ENCODE measurements at regions of chr4 and their contacts with region 1.

Region 1: GRCh38 chr4:145609481-145610427 is 9.4 kb upstream of the MMAA start:
- DNase-seq: peak; percentile 73 to 89
- H3K4me3 ChIP-seq: no peak overlapping the region
- H3K27ac ChIP-seq: no peak overlapping the region
- H3K4me1 ChIP-seq: no peaks in the 10 kb centered on the region
- H3K27me3 ChIP-seq: no peaks in the 10 kb centered on the region
- CTCF ChIP-seq: peak in 5 of 7 experiments; percentile 56 to 74 (median 72)
- EP300 ChIP-seq: no peak
- POLR2A ChIP-seq: no peak

Region 2: DNA sequence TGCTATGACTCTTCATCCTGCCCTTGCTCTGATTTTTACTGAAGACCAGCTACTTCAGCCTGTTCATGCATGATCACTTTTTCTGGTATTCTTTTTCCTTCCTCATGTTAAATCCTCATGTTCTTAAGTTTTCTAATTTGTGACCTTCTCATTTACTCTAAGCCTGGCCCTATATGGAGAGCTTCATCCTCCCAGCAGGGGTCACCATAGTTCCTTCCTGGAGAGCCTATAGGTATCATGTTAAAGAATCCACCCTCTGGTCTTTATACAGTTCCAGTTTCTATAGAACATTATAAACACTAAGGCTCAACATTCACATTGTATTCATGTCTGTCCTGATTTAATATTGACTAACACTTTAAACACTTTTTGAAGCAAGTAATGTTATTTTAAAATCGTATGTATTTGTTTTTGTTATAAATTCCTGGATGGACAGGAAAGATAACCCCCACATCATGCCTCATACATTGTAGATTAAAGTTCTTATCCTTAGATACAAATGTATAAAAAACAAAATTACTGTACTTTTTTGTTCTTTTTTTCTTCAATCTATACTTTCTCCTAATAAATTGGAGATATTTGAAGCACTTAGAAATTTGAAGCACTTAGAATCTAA is 375.6 kb before region 1 on chr4:
- intact Hi-C with region 1: loop called (anchors 5 kb)
- DNase-seq: peak; percentile 59 to 89
- H3K4me3 ChIP-seq: no peak overlapping the region
- H3K27ac ChIP-seq: no peak overlapping the region
- H3K4me1 ChIP-seq: no peaks in the 10 kb centered on the region
- H3K27me3 ChIP-seq: no peaks in the 10 kb centered on the region
- CTCF ChIP-seq: peak in 5 of 7 experiments; percentile 55 to 80 (median 75)
- EP300 ChIP-seq: no peak
- POLR2A ChIP-seq: no peak

Region 3: DNA sequence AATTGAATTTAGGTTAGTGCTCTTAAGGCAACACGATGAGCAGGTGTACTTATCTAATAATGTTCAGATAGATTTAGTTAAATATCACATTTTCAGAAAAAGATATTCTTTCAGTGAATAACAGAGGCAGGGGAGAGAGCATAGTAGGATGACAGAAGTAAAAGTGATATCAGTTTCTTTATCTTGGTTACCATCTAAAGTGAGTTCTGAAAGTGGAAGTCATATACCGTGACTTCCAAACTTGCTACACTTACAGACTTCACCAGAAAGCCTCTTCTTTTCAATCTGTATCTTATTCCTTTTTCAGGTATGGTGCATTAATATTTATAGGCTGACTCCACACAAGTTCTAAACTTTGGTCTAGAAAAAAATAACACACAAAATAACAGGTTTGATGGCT is 1153.8 kb after region 1 on chr4:
- intact Hi-C with region 1: no loop called
- DNase-seq: no peak
- H3K4me3 ChIP-seq: no peak overlapping the region
- H3K27ac ChIP-seq: no peak overlapping the region
- H3K4me1 ChIP-seq: no peaks in the 10 kb centered on the region
- H3K27me3 ChIP-seq: no peaks in the 10 kb centered on the region
- CTCF ChIP-seq: no peak
- EP300 ChIP-seq: no peak
- POLR2A ChIP-seq: no peak